GM10248 (cell line): ENCODE measurements at regions of chr19 and their contacts with region 1.

Region 1: GRCh38 chr19:14689598-14690503 is at the start of gene ZNF333:
- DNase-seq: peak; percentile 97
- CTCF ChIP-seq: no peak

Region 2: DNA sequence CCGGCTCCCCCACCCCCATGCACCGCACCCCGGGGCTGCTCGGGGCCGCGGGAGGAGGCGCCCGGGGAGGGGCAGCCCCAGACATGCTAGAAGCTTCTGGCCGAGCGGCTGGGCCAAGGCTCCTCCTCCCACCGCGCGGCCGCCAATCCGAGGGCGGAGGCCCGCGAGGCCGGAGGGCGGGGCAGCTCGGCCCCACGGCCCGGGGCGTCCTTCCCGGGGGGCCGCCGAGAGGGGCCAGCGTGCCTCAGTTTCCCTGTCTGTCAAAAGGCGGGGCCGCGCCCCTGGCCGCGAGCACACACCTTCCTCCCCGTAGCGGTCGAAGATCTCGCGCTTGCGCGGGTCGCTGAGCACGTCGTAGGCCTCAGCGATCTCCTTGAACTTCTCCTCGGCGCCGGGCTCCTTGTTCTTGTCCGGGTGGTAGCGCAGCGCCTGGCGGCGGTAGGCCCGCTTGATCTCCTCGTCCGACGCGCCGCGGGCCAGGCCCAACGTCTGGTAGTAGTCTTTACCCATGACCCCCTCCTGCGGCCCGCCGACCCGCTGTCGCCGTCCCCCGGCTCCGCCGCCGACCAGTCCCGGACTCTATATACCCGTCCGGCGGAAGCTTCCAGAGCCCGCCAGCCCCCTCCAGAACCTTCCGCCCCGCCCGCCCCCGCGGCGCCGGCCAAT is 171.9 kb before region 1 on chr19 and contains the start of gene DNAJB1:
- CTCF ChIA-PET with region 1: no interaction called
- POLR2A ChIA-PET with region 1: no interaction called
- DNase-seq: peak; percentile 93
- CTCF ChIP-seq: no peak

Region 3: DNA sequence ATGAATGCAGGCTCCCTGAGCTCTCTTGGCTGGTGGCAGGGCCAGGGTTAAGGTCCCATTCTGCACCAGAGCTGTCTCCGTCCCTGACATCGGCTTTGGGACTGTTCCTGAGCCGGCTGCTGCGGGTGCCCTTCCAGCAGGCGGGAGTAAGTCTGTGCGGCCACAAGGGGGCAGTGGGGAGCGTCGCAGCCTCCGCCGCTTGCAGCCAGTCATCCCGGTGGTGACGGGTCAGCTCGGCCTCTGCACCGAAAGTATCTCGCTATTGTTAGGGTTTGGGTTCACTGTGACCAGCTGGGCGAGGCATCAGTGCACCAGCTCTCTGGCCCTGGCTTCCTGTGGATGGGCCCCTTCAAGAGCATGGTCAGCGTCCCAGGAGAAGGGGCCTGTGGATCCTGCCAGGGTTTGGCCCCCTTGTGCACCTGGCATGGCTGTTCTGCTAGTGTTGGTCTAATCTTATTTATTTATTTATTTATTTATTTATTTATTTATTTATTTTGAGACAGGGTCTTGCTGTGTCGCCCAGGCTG is 133.1 kb before region 1 on chr19:
- CTCF ChIA-PET with region 1: interaction called, 73 read pairs
- POLR2A ChIA-PET with region 1: no interaction called
- DNase-seq: peak; percentile 91
- CTCF ChIP-seq: peak; percentile 91

Region 4: GRCh38 chr19:14563989-14564651 is 125.7 kb before region 1 on chr19:
- CTCF ChIA-PET with region 1: interaction called, 307 read pairs
- POLR2A ChIA-PET with region 1: no interaction called
- DNase-seq: peak; percentile 71
- CTCF ChIP-seq: no peak

Region 5: GRCh38 chr19:14674764-14675163 is 15.1 kb before region 1 on chr19 and contains the start of gene ADGRE3:
- CTCF ChIA-PET with region 1: interaction called, 96 read pairs
- POLR2A ChIA-PET with region 1: no interaction called
- DNase-seq: no peak
- CTCF ChIP-seq: no peak